Heart left ventricle (tissue), 16 donors: ENCODE measurements at regions of chr20 and their contacts with region 1.

Region 1: DNA sequence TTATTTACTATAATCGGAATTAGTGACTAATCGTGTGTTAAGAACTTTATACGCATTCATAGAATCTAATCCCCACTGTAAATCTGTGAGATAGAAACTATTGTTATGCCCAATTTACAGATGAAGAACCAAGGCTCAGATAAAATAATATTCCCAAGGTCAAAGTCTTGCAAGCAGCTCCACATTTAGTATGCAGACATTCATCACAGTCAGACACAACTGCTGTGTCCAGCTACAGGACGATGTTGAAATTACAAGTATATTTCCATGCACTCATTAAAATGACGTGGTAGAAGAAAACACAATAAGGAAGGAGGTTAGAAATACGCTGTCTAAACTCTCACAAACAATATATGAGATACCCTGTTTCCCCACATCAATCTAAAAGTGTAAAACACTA is 82.5 kb downstream of the PREX1 start:
- DNase-seq: no peak
- ATAC-seq: no peak
- H3K4me3 ChIP-seq: no peak overlapping the region
- H3K27ac ChIP-seq: no peak overlapping the region
- H3K4me1 ChIP-seq: peaks cover 0 to 33% (median 0%) of the 10 kb centered on the region in 12 donors
- H3K27me3 ChIP-seq: no peaks in the 10 kb centered on the region
- CTCF ChIP-seq: no peak
- POLR2A ChIP-seq: no peak

Region 2: DNA sequence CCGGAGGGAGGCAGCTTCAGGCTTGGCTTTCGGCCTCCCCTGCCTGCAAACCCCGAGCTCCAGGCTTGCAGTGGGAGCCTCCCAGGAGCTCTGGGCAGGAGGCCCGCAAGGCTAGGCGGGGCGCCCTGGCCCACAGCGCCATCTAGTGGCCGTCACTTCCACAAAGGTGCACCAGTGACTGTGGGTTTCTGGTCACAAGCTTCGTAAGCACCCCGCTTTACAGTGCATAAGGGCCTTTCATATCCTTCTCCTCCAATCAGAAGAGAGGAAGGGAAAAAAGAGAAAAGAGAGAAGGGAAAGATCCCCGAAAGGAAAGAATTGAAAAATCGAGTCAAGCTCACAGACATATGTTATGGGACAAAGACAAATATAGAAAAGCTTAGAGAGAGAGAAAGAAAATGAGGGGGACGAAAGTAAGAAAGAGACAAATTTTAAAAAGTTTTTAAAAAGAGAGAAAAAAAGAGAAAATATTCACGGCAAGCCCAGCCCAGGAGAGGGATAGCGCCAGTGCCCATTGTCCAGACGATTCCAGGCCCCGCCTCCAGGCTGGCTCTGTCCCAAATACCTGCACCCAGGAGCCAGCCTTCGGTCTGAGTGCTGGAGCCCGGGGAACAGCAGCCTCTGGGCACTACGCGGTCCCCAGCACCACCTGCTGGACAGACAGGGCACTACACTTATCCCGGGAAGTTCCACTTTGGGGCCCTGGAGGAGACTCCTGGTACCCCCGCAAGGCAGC is 124.6 kb before region 1 on chr20:
- intact Hi-C with region 1: no loop called
- DNase-seq: peak; percentile 84 to 91 (median 86)
- ATAC-seq: peak; percentile 88 to 95 (median 94)
- H3K4me3 ChIP-seq: peak overlapping the region in 9 of 12 donors; percentile 1 to 55 (median 37)
- H3K27ac ChIP-seq: no peak overlapping the region
- H3K4me1 ChIP-seq: peaks cover 0 to 27% (median 15%) of the 10 kb centered on the region in 12 donors
- H3K27me3 ChIP-seq: no peaks in the 10 kb centered on the region
- CTCF ChIP-seq: peak in 11 of 12 donors; percentile 74 to 90 (median 81)
- POLR2A ChIP-seq: no peak

Region 3: DNA sequence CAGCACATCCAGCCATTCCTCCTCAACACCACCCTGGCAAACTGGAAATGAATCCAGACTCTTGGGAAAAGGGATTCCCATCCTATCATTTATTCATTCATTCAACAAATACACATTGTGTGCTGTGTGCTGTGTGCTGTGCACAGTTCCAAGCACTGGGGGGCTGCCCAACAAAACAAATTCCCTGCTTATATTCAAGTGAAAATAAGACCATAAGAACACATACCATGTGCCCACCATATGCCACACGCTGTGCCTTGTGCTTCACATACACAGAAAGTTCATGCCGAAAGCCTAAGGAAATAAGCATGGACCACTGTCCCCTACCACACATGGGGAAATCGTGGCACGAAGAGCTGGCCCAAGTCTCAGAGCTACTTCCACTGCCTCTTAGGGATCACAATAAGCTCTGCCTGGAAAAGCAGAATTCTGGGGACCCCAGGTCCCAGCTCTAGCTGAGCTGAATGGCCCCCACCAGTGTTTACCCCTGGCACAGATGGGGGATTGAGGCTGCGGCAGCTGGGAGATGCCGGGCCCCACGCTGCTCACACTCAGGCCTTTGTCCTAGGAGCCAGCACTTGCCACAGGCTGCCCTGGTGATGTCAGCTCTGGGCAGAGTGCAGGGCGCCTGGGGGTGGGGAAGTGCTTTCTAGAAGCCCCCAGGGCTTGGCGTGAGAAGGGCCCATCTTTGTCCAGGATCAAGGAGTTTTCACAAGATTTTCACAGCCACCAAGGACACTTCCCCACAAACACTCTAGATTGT is 17.1 kb before region 1 on chr20:
- intact Hi-C with region 1: loop called in 1 of 10 experiments (anchors 1 kb)
- DNase-seq: no peak
- ATAC-seq: no peak
- H3K4me3 ChIP-seq: no peak overlapping the region
- H3K27ac ChIP-seq: no peak overlapping the region
- H3K4me1 ChIP-seq: peaks cover 0 to 52% (median 10%) of the 10 kb centered on the region in 12 donors
- H3K27me3 ChIP-seq: no peaks in the 10 kb centered on the region
- CTCF ChIP-seq: no peak
- POLR2A ChIP-seq: no peak

Region 4: DNA sequence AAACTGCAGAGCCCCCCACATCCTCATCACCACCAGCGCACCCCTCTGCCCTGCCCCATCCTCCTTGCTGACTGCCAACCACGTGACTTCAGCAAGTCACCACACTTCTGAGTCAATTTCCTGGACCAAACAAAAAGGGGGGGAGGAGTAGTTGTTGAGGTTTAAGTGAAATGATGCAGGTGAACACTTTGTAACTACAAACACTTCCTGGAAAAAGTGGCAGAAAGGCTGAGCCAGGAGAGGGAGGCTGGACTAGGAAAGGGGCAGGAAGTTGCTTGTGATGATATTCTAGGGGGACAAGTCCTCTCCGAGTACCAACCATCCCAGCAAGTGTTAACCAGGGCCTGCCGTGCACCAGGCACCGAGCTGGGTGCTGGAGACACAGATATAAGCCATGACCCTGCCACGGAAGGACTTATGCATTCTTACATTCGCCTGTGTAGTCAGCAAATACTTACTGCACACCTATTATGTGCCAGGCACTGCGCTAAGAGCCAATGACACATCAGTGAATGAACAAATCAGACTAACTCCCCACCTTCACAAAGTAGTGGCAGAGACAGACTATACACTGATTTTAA is 15.2 kb after region 1 on chr20:
- intact Hi-C with region 1: no loop called
- DNase-seq: peak in 3 of 5 donors; percentile 32 to 66 (median 41)
- ATAC-seq: peak; percentile 23 to 68 (median 57)
- H3K4me3 ChIP-seq: peak overlapping the region in 1 of 12 donors; percentile 23
- H3K27ac ChIP-seq: peak overlapping the region; percentile 26 to 87 (median 62)
- H3K4me1 ChIP-seq: peaks cover 0 to 92% (median 23%) of the 10 kb centered on the region in 12 donors
- H3K27me3 ChIP-seq: no peaks in the 10 kb centered on the region
- CTCF ChIP-seq: no peak
- POLR2A ChIP-seq: no peak

Region 5: DNA sequence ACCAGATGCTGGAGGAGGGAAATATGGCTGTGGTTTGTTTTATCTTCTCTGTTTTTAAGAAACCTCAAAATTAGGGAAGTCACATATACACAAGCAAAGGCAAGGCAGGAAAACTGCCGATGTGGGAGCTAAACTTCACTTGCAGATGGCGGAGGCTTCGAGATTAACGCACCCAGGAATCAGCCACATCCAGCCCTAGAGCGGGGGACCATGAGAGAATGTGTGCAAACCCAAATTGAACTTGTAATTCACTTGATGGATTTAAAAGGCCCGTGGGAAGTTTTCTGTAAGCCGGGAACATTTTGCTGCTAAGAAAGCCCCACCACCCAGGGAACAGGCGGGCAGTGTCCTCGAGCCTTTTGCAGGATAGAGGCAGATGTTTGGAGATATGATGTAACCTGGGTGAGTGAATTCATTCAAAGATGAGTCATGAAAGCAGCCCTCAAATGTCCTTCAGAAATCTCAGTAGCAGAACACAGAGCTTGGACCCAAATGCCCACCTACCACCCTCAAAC is 42.6 kb after region 1 on chr20:
- intact Hi-C with region 1: no loop called
- DNase-seq: no peak
- ATAC-seq: peak in 1 of 4 donors; percentile 20
- H3K4me3 ChIP-seq: no peak overlapping the region
- H3K27ac ChIP-seq: peak overlapping the region in 1 of 12 donors; percentile 82
- H3K4me1 ChIP-seq: peaks cover 0 to 92% (median 15%) of the 10 kb centered on the region in 12 donors
- H3K27me3 ChIP-seq: no peaks in the 10 kb centered on the region
- CTCF ChIP-seq: no peak
- POLR2A ChIP-seq: no peak

Region 6: DNA sequence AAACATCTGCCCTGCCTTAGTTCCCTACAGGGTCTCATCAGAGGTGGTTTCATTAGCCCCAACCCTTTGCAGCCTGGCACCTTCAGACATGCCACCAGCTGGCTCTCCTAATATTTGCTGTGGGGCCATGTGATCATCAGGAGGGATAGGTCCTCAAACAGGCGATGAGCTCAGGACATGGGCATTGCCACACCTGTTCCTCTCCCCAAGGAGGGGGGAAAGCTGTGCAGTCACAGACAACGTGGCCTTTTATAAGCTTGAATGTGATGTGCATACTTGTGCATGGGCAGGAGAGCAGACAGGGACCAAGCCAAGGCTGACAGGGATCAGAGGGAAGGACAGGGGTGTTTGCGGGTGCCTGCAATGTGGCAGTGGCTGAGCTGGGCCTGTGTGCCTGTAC is 611.4 kb after region 1 on chr20:
- intact Hi-C with region 1: no loop called
- DNase-seq: no peak
- ATAC-seq: no peak
- H3K4me3 ChIP-seq: no peak overlapping the region
- H3K27ac ChIP-seq: no peak overlapping the region
- H3K4me1 ChIP-seq: no peaks in the 10 kb centered on the region
- H3K27me3 ChIP-seq: no peaks in the 10 kb centered on the region
- CTCF ChIP-seq: no peak
- POLR2A ChIP-seq: no peak